Activated CD8-positive, alpha-beta memory T cell treated with anti-CD3 and anti-CD28 coated beads, Interleukin-2, amount 10 ng/mL, durations not matched to agents 7 days and 5 days (primary cell): ENCODE measurements at regions of chr19 and their contacts with region 1.

Region 1: DNA sequence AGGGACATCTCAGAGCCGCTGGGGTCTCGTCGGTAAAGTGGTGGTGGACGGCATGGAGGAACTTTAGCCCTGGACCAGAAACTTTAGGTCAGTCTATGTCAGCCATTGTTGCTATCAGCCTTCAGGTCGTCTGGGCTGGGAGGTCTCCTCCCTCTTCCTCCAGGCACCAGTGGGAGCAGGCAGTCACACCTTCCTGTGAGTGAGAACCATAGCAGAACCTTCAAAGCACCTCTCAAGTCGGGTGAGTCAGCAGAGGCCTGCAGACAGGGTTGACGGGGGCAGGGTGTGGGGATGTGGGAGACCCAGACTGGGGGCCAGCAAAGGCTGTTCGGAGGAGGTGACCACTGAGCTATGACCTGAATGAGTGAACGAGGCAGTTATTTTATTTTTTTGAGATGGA is 15.4 kb upstream of the SBNO2 start:
- DNase-seq: peak; percentile 61
- ATAC-seq: peak; percentile 43
- H3K4me3 Mint-ChIP-seq: no peak overlapping the region
- H3K27ac Mint-ChIP-seq: peak overlapping the region; percentile 48
- H3K4me1 Mint-ChIP-seq: peaks cover 22% of the 10 kb centered on the region
- H3K27me3 Mint-ChIP-seq: no peaks in the 10 kb centered on the region

Region 2: GRCh38 chr19:1087813-1088415 is 101.5 kb before region 1 on chr19:
- CTCF ChIA-PET with region 1: interaction called, 23 read pairs
- DNase-seq: no peak
- ATAC-seq: peak; percentile 23
- H3K4me3 Mint-ChIP-seq: peak overlapping the region; percentile 21
- H3K27ac Mint-ChIP-seq: peak overlapping the region; percentile 84
- H3K4me1 Mint-ChIP-seq: peaks cover 47% of the 10 kb centered on the region
- H3K27me3 Mint-ChIP-seq: no peaks in the 10 kb centered on the region

Region 3: DNA sequence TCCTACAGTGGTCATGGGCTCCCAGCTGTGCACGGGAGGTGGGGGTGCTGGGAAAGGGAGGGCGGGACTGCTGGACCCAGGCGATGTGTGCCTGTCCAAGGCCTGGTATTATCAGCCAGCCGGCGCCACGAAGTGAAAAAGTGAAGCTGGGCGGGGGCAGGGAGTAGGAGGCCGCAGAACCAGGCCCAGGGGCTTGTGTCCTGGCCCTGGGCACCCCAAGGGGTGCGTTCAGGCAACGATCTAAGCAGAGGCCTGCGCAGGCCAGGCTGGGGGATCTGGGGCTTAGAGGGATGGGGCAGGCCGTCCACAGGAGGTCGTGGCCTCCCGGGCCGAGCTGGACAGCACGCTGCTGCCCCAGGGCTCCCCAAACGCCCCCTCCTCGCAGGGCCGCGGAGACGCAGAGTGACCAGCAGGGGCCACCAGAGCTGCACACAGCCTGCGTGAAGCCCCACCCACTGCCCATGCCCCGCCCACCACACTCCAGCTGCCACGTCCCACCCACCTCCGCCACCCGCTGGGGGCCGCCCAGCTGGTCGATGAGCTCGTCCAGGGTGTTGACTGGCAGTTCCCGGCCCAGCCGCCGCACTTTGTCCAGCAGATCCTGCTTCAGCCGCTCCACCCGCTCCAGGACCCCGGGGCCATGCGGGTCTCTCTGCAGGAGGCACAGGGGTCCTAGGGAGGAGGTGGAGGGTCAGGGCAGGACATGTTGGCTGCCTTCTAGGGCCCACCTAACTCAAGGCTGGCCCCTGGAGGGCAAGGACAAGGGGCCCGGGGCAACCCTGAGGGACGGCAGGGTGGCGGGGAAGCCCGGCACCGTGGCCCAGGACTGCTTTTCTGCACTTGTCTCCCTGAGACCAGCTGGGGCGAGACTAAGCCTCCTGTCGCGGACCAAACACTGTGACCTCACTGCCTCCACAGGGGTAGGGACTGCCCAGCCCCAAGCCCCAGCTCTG is 76.1 kb before region 1 on chr19:
- CTCF ChIA-PET with region 1: interaction called, 52 read pairs
- DNase-seq: peak; percentile 88
- ATAC-seq: peak; percentile 87
- H3K4me3 Mint-ChIP-seq: no peak overlapping the region
- H3K27ac Mint-ChIP-seq: no peak overlapping the region
- H3K4me1 Mint-ChIP-seq: peaks cover 3% of the 10 kb centered on the region
- H3K27me3 Mint-ChIP-seq: no peaks in the 10 kb centered on the region

Region 4: GRCh38 chr19:1131738-1132551 is 57.5 kb before region 1 on chr19:
- CTCF ChIA-PET with region 1: interaction called, 12 read pairs
- DNase-seq: peak; percentile 93
- ATAC-seq: peak; percentile 64
- H3K4me3 Mint-ChIP-seq: peak overlapping the region; percentile 89
- H3K27ac Mint-ChIP-seq: peak overlapping the region; percentile 91
- H3K4me1 Mint-ChIP-seq: peaks cover 33% of the 10 kb centered on the region
- H3K27me3 Mint-ChIP-seq: no peaks in the 10 kb centered on the region

Region 5: DNA sequence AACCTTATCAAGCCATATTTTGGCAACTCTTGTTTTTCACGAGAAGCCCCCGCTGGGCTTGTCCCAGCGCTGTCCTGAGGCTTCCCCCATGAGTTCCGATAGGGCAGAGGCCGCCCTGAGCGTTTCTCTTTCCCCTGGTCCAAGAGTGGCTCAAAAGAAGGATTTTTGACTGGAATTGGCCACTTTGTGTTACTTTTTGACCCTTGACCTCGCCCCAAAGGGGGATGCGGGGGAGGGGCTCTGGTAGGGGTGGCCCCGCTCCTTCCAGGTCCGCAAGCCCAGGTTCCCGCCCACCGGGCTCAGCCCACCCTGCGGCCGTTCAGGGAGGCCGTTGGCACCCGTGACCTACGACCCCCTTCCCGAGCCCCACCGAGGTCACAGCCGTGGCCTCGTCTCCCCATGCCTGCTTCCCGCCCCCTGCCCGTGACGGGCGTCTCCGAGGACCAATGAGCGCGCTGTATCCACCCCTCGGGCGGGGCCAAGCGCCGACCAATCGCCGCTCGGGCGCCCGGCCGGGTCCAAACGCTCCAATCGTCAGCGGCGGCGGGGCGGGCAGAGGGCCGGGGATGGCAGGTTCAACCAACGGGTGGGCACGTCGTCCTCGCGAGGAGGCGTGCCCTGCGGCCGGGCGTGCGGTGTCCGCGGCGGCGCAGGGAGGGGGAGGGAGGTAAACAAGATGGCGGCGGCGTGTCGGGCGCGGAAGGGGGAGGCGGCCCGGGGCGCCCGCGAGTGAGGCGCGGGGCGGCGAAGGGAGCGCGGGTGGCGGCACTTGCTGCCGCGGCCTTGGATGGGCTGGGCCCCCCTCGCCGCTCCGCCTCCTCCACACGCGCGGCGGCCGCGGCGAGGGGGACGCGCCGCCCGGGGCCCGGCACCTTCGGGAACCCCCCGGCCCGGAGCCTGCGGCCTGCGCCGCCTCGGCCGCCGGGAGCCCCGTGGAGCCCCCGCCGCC is 16.0 kb after region 1 on chr19 and contains the start of gene STK11:
- CTCF ChIA-PET with region 1: interaction called, 21 read pairs
- DNase-seq: peak; percentile 100
- ATAC-seq: peak; percentile 97
- H3K4me3 Mint-ChIP-seq: peak within 1 kb of the TSS; percentile 92
- H3K27ac Mint-ChIP-seq: peak within 1 kb of the TSS; percentile 86
- H3K4me1 Mint-ChIP-seq: peaks cover 29% of the 10 kb centered on the region
- H3K27me3 Mint-ChIP-seq: no peaks in the 10 kb centered on the region
- total RNA-seq, gene STK11: 76.7 to 80.5 TPM